ENCODE measurements at regions of chr17 and their contacts with region 1.

Region 1: DNA sequence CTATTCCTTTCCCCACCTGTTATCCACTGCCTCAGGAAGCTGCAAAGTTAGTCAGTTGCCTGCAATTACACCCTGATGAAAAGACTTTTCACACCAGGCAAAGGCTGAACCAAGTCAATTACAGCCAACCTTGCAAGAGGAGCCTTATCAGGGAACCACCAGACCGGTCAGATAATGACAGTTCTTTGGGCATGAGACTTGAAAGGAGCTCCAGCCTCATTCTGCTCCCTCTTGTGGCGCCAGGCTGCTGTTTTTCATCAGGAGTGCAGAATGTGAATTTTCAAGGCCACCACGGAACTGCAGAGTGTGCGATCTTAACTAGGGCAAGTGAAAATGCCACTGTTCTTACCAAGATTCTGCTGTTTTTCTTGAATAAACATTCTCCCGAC is 22.5 kb downstream of the DNAI2 start:
- H3K4me3 ChIP-seq: no peak overlapping the region
- H3K27ac ChIP-seq: no peak overlapping the region
- H3K4me1 ChIP-seq: no peaks in the 10 kb centered on the region
- CTCF ChIP-seq: no peak; the same call in 1 of the 2 replicates

Region 2: DNA sequence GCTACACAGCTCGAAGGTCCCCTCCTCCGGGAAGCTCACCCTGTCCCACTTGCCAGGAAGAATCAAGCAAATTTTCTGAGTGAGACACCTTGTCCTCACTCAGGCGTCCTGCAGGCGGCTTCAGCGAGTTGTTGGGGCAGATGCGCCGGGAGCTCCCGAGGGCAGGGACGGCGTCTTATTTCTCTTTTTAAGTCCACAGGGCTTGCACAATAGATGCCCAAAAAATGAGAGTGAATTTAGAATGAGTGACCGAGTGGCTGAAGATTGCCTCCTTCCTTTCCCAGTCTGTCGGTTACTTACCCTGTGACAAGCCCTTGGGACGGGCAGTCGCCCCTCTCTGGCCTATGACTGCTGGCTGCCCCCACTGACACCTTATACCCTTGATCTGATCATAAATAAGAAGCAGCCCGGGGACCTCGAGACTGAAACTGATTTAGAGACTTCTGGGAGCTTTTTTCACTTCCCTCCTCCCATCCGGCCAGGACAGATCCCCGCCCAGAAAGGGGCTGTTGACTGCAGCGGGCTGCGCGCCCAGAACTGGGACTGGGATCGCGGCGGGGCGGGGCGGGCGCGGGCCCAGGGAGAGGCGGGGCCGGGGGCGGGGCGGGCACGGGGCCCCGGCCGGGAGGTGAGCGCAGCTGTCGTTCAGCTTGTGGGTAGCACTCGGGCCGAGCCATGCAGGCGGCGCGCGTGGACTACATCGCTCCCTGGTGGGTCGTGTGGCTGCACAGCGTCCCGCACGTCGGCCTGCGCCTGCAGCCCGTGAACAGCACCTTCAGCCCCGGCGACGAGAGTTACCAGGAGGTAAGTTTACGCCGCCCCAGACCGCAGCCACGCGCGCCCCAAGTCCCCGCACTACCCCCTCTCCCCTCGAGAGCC is 83.4 kb before region 1 on chr17 and contains the start of gene TTYH2:
- CTCF ChIA-PET with region 1: interaction called, 18 read pairs
- POLR2A ChIA-PET with region 1: interaction called, 7 read pairs
- H3K4me3 ChIP-seq: peak within 1 kb of the TSS; percentile 45
- H3K27ac ChIP-seq: peak within 1 kb of the TSS; percentile 35; the same call in 1 of the 2 replicates
- H3K4me1 ChIP-seq: no peaks in the 10 kb centered on the region
- CTCF ChIP-seq: no peak

Region 3: GRCh38 chr17:74259667-74260524 is 36.6 kb before region 1 on chr17:
- CTCF ChIA-PET with region 1: interaction called, 10 read pairs
- POLR2A ChIA-PET with region 1: no interaction called
- H3K4me3 ChIP-seq: no peak overlapping the region
- H3K27ac ChIP-seq: no peak overlapping the region
- H3K4me1 ChIP-seq: no peaks in the 10 kb centered on the region
- CTCF ChIP-seq: no peak

Region 4: DNA sequence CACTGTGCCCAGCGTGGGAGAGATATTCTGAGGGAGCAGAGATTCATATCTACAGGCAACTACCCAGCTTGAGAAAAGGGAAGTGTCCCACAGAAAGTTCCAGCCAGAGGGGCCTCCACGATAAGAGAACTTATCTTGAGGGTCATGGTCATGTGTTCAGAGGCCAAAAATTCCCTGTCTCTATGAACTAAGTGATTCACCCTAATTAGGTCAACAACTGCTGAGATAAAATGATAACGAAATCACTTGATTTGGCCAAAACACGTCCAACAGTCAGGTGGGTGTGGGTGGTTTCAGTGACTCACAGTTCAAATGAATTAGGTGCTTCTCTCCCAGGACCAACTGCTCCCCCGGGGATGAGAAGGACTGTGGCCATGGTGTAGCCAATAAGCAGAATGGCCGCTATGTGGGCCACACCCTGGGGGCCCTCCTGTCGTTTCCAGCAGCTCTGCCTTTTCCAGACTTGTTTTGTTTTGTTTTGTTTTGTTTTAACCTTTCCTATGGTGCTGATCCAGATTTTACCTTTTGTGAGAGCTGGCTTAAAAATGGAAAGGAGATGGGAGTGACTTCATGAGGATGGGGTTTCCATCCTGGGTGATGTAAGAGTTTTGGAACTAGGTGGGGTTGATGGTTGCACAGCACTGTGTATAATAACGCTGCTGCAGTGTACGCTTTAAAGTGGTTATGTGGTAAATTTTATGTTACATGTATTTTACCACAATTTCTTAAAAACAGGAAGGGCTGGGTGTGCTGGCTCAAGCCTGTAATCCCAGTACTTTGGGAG is 13.8 kb before region 1 on chr17:
- CTCF ChIA-PET with region 1: interaction called, 108 read pairs
- POLR2A ChIA-PET with region 1: interaction called, 3 read pairs
- H3K4me3 ChIP-seq: no peak overlapping the region
- H3K27ac ChIP-seq: no peak overlapping the region
- H3K4me1 ChIP-seq: 0 out of 2 replicates have a peak, but pooled peaks cover 2% of the 10 kb centered on the region
- CTCF ChIP-seq: no peak

Region 5: DNA sequence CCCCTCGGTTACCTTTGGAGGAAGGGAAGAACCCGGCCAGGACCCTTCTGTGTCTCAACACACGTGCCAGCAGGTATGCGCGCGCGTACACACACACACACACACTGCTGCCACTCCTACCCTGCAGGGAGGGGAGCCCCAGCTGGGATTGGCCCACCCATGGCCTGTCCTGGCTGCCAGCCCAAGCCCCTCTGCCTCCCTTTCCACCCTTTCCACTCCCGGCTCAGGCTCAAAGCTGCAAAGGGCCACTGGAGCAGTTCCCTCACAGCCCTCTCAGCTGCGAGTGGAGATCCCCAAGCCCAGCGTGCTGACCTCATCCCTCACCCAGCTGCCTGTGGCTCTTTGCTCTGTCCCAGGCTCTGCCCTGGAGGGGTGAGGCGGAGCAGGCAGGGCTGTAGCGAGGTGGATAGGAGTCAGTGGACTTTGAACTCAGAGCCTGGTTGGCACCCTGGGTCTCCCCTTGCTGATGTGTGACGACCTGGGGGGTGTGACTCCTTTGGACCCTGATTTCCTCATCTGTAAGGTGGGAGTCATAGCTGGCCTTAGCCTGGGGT is 44.0 kb after region 1 on chr17:
- CTCF ChIA-PET with region 1: no interaction called
- POLR2A ChIA-PET with region 1: no interaction called
- H3K4me3 ChIP-seq: no peak overlapping the region
- H3K27ac ChIP-seq: no peak overlapping the region
- H3K4me1 ChIP-seq: no peaks in the 10 kb centered on the region
- CTCF ChIP-seq: no peak

Region 6: DNA sequence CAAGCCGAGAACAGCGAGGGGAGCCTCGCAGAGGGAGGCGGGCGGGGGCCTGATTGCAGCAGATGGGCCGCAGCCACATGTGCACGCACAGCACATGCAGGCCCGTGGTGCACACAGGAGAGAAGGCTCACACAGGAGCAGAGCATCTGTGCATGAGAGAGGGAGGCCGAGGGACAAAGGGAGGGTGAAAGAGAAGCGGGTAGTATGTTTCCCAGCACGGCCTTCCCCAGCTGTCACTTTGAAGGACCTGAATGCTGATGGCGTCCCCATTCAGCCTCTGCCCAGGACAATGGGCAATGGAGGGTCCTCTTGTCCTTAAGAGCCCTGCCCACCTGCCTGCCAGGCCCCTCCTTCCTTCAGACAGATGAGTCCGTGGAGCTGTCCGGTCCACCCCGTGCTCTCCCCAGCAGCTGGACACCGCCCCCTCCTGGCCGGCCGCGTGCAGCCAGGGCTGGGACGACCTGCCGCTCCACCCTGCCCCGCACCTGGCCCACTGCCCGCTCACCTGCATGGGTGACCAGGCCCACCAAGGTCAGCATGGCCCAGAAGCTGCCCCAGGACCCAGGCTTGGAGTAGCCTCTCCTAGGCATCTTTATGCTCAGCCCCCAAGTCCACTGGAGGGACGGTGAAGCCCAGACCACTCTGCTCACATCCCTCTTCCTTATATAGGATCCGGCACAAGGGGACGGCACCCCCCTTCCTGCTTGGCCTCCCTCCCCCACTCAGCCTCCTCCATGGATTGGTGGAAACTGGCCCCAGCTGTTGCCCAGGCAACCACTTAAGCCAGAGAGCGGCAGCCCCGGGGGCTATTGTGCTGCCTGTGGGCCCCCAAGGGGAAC is 64.9 kb after region 1 on chr17 and contains the start of gene BTBD17:
- CTCF ChIA-PET with region 1: interaction called, 104 read pairs
- POLR2A ChIA-PET with region 1: no interaction called
- H3K4me3 ChIP-seq: no peak within 1 kb of the TSS
- H3K27ac ChIP-seq: no peak within 1 kb of the TSS
- H3K4me1 ChIP-seq: no peaks in the 10 kb centered on the region
- CTCF ChIP-seq: peak; percentile 79

Measured in HEK293 (cell line).